T-cell (primary cell): ENCODE measurements at regions of chr1 and their contacts with region 1.

Region 1: GRCh38 chr1:40064797-40065499 is 24.4 kb downstream of the CAP1 start:
- DNase-seq: peak in 1 of 35 experiments; percentile 17
- ATAC-seq: peak; percentile 40 to 67 (median 52)
- H3K4me3 ChIP-seq: peak overlapping the region in 1 of 2 donors; percentile 19
- H3K4me3 Mint-ChIP-seq: peak overlapping the region in 2 of 3 donors; percentile 6 to 57
- H3K27ac ChIP-seq: peak overlapping the region; percentile 26
- H3K27ac Mint-ChIP-seq: peak overlapping the region; percentile 86 to 89
- H3K4me1 ChIP-seq: peaks cover 43 to 54% of the 10 kb centered on the region in 2 experiments
- H3K4me1 Mint-ChIP-seq: peaks cover 63 to 68% (median 66%) of the 10 kb centered on the region in 3 donors
- H3K27me3 ChIP-seq: no peaks in the 10 kb centered on the region
- H3K27me3 Mint-ChIP-seq: no peaks in the 10 kb centered on the region

Region 2: GRCh38 chr1:40096977-40097782 is 32.2 kb after region 1 on chr1 and contains the start of gene PPT1:
- CTCF ChIA-PET with region 1: no interaction called
- POLR2A ChIA-PET with region 1: interaction called in 1 of 2 experiments, 13 read pairs
- DNase-seq: peak; percentile 48 to 86 (median 68)
- ATAC-seq: peak; percentile 93 to 95 (median 95)
- H3K4me3 ChIP-seq: peak within 1 kb of the TSS; percentile 51 to 64
- H3K4me3 Mint-ChIP-seq: peak within 1 kb of the TSS; percentile 95 to 99 (median 96)
- H3K27ac ChIP-seq: peak within 1 kb of the TSS; percentile 41
- H3K27ac Mint-ChIP-seq: peak within 1 kb of the TSS; percentile 94
- H3K4me1 ChIP-seq: peaks cover 4 to 14% of the 10 kb centered on the region in 2 experiments
- H3K4me1 Mint-ChIP-seq: peaks cover 37 to 40% (median 40%) of the 10 kb centered on the region in 3 donors
- H3K27me3 ChIP-seq: peaks cover 0 to 6% of the 10 kb centered on the region in 2 experiments
- H3K27me3 Mint-ChIP-seq: peaks cover 0 to 3% of the 10 kb centered on the region in 2 donors
- total RNA-seq, gene PPT1: 44.4 to 72.6 (median 53.1) TPM